ENCODE measurements at regions of chr2 and their contacts with region 1.

Region 1: DNA sequence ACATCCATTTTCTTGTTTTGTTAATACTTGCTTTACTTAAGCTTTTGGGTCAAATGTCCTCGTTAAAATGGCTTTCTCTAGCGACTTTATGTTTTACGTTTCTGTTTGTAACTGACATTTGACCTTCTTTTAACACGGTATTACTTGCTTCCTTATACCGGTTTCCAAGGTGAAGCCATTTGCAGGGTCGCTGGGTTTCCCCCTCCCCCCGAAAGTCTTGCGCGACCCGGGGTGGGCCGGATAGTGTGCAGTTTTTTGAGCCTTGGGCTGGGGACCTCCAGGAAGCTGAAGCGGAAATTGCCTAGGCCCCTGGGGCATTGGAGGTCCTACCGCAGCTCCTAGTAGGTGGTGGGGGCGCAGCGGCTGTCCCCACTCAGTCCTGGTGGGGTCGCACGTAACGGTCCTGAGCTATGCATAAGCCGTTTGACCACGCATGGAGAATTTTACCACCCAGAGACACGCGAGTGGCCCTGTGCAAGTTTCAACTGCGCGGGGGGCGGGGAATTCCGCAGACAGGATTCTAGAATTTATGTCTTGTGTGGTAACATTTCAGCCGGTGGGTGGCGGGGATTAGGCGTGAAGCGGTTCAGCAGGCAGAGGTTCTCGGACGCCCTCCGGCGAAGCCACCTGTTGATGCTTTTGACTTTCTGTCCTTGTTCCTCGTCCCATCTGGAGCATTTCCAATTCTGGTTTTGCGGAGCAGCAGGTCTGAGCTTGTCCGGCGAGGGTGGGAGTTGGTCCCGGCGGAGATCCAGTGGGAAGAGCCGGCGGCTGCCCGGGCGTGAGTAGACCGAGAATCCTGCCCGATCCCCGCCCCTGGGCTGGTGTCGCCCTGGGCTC is 2.4 kb downstream of the CFLAR start:
- DNase-seq: peak in 1 of 2 experiments; percentile 52
- H3K4me3 ChIP-seq: peak overlapping the region; percentile 31 to 67 (median 54)
- H3K27ac ChIP-seq: no peak overlapping the region
- H3K4me1 ChIP-seq: peaks cover 4 to 11% (median 7%) of the 10 kb centered on the region in 4 experiments
- H3K27me3 ChIP-seq: no peaks in the 10 kb centered on the region
- CTCF ChIP-seq: peak; percentile 12 to 42 (median 22)
- EP300 ChIP-seq: no peak
- POLR2A ChIP-seq: no peak; a peak in 1 of 3 replicates
- RAD21 ChIP-seq: peak; percentile 16 to 26; a peak in 2 of 4 replicates

Region 2: GRCh38 chr2:201130524-201131186 is 12.3 kb after region 1 on chr2:
- CTCF ChIA-PET with region 1: interaction called, 10 read pairs
- POLR2A ChIA-PET with region 1: interaction called, 7 read pairs
- DNase-seq: no peak
- H3K4me3 ChIP-seq: no peak overlapping the region
- H3K27ac ChIP-seq: no peak overlapping the region
- H3K4me1 ChIP-seq: peaks cover 0 to 3% (median under 1%) of the 10 kb centered on the region in 4 experiments; a peak in 3 of 7 replicates
- H3K27me3 ChIP-seq: no peaks in the 10 kb centered on the region
- CTCF ChIP-seq: no peak
- EP300 ChIP-seq: no peak
- POLR2A ChIP-seq: no peak
- RAD21 ChIP-seq: no peak

Region 3: GRCh38 chr2:201149064-201149820 is 30.9 kb after region 1 on chr2:
- CTCF ChIA-PET with region 1: interaction called, 10 read pairs
- POLR2A ChIA-PET with region 1: interaction called, 4 read pairs
- DNase-seq: no peak
- H3K4me3 ChIP-seq: no peak overlapping the region
- H3K27ac ChIP-seq: no peak overlapping the region
- H3K4me1 ChIP-seq: no peaks in the 10 kb centered on the region
- H3K27me3 ChIP-seq: no peaks in the 10 kb centered on the region
- CTCF ChIP-seq: no peak
- EP300 ChIP-seq: no peak
- POLR2A ChIP-seq: no peak
- RAD21 ChIP-seq: no peak

Measured in H1 (cell line).